ENCODE measurements at regions of chr15 and their contacts with region 1.

Region 1: DNA sequence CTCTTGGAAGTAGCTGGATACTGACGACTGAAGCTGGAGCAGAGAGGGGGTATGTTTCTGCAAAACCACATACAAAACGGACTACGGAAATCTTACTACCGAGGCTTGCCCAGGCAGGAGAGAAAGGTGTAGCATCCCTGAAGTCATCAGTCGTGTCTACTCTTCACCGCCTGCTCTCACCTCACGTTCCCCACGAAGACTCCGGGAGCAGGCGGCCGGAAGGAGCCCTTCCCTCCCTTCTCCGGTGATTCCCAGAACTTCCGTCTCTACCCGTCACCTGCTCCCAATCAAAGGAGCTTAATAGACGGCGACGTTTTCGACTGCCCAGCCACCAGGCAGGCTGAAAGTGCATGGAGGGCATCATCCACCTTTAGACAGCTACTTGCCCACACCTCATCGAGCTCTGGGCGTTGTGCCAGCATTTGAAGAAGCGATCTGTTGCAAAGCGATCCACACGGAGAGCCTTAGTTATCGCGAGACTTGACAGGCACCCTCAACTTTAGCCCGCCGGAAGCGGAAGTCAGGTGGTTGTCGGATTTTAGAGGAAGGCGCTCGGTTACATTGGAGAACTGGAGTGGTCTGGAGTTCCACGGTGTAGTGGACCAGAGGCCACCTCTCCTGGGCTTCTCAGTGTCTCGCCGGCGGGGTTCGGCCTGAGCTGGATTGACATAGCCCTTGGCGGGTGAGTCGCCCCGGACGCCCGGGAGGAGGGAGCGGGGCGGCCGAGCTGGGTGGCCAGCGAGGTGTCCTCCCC is at the start of gene RAMAC:
- DNase-seq: peak; percentile 97
- H3K4me3 ChIP-seq: peak within 1 kb of the TSS; percentile 67
- H3K27ac ChIP-seq: peak within 1 kb of the TSS; percentile 81
- H3K4me1 ChIP-seq: peaks cover 3% of the 10 kb centered on the region
- H3K27me3 ChIP-seq: no peaks in the 10 kb centered on the region
- CTCF ChIP-seq: no peak
- total RNA-seq, gene RAMAC: 27.4 and 28.1 TPM in 2 replicates

Region 2: DNA sequence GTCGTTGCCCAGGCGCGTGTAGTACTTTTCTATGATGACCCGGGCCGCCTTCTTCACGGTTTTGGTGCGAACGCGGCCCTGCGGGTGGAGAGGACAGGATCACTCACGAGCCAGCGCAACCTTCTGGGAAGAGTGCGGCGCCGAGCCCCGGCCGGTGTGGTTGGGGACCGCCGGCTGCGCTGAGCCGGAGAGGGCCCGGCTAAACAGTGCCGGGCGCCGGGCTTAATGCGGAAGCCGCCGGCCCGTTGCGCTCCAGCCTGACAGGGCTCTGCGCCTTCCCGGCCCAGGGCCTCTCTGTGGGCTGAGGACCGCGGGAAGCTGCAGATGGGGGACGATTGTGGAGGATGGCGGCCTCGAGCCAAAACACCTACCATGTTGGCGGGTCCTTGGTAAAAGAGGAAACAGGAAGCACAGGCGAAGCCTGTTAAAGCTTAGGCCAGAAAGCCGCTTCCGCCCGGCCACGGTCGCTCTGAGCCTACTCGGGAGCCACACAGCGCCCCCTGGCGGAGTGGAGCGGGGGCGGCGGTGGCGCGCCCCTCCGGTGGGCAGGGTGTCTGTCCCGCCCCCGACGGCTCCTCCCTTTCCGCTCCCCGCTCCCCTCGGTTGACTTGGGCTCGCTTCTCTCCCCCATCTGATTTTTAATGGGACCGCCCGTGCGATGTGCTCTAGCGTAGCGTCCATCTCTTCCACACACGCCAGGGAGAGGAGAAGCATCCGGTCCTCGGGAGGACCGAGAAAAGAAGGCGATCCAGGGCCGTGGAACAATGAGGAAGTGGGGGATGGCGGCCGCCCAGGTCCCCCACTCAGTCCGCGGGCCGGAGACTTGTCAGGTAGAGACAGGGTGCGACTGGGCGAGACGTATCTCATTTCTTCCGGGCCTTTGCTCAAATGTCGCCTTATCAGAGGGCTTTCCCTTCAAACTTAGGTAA is 445.5 kb before region 1 on chr15 and contains the start of gene RPS17:
- CTCF ChIA-PET with region 1: no interaction called
- POLR2A ChIA-PET with region 1: no interaction called
- intact Hi-C with region 1: loop called (anchors 5 kb)
- DNase-seq: peak; percentile 97
- H3K4me3 ChIP-seq: peak within 1 kb of the TSS; percentile 76
- H3K27ac ChIP-seq: peak within 1 kb of the TSS; percentile 91
- H3K4me1 ChIP-seq: peaks cover 15% of the 10 kb centered on the region
- H3K27me3 ChIP-seq: no peaks in the 10 kb centered on the region
- CTCF ChIP-seq: peak; percentile 99
- total RNA-seq, gene RPS17: 1,732 and 1,749 TPM in 2 replicates

Region 3: GRCh38 chr15:82849556-82850512 is 136.0 kb before region 1 on chr15:
- CTCF ChIA-PET with region 1: no interaction called
- POLR2A ChIA-PET with region 1: no interaction called
- intact Hi-C with region 1: loop called (anchors 5 kb)
- DNase-seq: peak; percentile 85
- H3K4me3 ChIP-seq: no peak overlapping the region
- H3K27ac ChIP-seq: no peak overlapping the region
- H3K4me1 ChIP-seq: peaks cover 18% of the 10 kb centered on the region
- H3K27me3 ChIP-seq: no peaks in the 10 kb centered on the region
- CTCF ChIP-seq: peak; percentile 82